BJ (cell line): ENCODE measurements at regions of chr14 and their contacts with region 1.

Region 1: DNA sequence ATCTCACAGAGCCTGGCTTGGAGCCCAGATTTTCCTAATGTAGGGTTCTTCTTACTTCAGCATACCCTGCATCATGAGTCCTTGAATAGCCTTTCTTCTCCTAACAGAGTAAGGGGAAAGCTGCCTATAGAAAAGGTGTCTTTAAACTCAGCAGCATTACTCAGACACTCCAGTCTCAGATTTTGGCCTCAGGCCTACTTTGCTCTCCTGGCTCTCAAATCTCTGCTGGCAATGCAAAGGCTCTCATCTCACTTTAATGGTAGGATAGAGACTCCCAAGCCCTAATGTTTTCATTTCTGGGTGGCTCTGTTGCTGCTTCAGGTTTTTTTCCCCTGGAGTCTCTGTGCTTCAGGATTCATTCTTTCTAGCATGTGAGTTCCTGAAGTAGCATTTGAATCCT is 9.1 kb upstream of the NKX2-8 start:
- DNase-seq: no peak
- H3K4me3 ChIP-seq: no peak overlapping the region
- H3K27me3 ChIP-seq: peaks cover 11% of the 10 kb centered on the region
- CTCF ChIP-seq: no peak

Region 2: DNA sequence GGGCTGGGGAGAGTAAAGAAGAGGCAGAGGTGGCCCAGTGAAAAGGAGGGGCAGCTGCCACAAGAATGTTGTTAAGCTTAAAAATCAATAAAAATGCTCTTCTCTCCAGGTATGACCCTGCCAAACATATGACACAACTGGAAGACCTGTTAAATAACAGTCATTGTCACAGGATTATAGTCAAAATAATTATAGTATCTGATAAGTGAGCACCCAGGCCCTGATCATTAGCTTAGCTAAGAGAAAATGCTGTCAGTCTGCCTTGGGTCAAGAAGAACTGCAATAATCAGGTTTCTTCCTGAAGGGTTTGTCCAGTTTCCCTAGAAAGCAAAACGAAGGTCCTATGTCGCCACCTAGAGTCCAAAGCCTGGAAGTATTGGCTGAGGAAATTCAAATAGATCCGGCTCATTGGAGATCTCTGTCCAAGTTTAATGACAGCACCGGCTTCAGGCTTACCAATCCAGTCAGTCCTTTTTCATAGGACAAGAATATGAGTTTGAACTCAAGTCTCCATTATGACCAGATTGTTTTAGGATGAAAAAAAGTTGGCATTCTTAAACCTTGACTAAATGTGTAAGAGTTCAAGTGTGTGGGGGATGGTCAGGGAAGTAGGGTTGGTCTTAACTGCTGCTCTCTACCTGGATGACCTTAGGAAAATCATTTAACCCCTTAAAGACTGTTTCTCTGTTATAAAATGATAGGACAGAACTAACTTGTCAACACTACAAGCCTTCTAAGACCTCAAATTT is 13.4 kb after region 1 on chr14:
- CTCF ChIA-PET with region 1: interaction called, 16 read pairs
- POLR2A ChIA-PET with region 1: no interaction called
- DNase-seq: peak; percentile 5
- H3K4me3 ChIP-seq: no peak overlapping the region
- H3K27me3 ChIP-seq: no peaks in the 10 kb centered on the region; the same call in 1 of the 2 replicates
- CTCF ChIP-seq: peak; percentile 84